Heart left ventricle (tissue), 16 donors: ENCODE measurements at regions of chr2 and their contacts with region 1.

Region 1: DNA sequence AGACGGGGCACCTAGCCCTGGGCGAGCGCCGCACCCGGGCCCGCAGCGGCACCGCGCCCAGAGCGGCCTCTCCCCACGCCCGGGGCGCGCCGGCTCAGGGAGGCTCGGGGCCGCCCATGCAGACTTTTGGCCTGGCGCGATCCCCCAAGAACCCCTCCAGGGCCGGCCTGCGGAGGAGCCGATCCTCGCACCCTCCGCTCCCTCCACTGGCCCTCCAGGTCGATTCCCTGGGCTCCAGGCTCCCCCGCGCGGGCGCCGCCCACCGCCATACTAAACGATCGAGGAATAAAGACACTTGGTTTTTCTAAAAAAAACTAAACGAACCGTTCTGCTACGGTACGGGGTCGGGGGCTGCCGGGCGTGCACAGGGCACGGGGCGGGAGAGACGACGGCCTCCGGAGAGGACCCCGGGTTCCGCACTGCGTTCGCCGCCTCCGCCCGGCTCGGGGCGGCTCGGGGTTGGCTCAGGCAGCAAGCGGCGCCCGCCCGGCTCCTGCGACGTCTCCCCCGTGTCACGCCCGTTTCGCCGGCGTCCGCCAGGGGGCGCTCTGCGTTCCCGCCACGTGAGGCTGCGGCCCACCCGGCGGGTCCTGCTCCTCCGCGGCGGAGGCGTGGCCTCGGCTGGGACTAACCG is 365 bp upstream of the KHK start:
- DNase-seq: peak; percentile 94 to 98 (median 96)
- ATAC-seq: peak; percentile 79 to 90 (median 88)
- H3K4me3 ChIP-seq: peak overlapping the region; percentile 54 to 88 (median 74)
- H3K27ac ChIP-seq: peak overlapping the region; percentile 78 to 96 (median 94)
- H3K4me1 ChIP-seq: peaks cover 4 to 46% (median 28%) of the 10 kb centered on the region in 12 donors
- H3K27me3 ChIP-seq: no peaks in the 10 kb centered on the region
- CTCF ChIP-seq: peak; percentile 75 to 96 (median 94)
- POLR2A ChIP-seq: peak in 1 of 2 donors; percentile 69

Region 2: GRCh38 chr2:26959331-26959730 is 126.9 kb before region 1 on chr2:
- intact Hi-C with region 1: loop called (anchors 1 to 5 kb)
- DNase-seq: no peak
- ATAC-seq: peak in 1 of 4 donors; percentile 44
- H3K4me3 ChIP-seq: no peak overlapping the region
- H3K27ac ChIP-seq: no peak overlapping the region
- H3K4me1 ChIP-seq: peaks cover 0 to 7% (median 0%) of the 10 kb centered on the region in 12 donors
- H3K27me3 ChIP-seq: peaks cover 0 to 46% (median 7%) of the 10 kb centered on the region in 9 donors
- CTCF ChIP-seq: no peak
- POLR2A ChIP-seq: no peak

Region 3: GRCh38 chr2:26964446-26965130 is 121.6 kb before region 1 on chr2:
- intact Hi-C with region 1: loop called (anchors 1 to 5 kb)
- DNase-seq: no peak
- ATAC-seq: no peak
- H3K4me3 ChIP-seq: no peak overlapping the region
- H3K27ac ChIP-seq: no peak overlapping the region
- H3K4me1 ChIP-seq: peaks cover 0 to 7% (median 0%) of the 10 kb centered on the region in 12 donors
- H3K27me3 ChIP-seq: peaks cover 0 to 8% (median 0%) of the 10 kb centered on the region in 9 donors
- CTCF ChIP-seq: no peak
- POLR2A ChIP-seq: no peak

Region 4: DNA sequence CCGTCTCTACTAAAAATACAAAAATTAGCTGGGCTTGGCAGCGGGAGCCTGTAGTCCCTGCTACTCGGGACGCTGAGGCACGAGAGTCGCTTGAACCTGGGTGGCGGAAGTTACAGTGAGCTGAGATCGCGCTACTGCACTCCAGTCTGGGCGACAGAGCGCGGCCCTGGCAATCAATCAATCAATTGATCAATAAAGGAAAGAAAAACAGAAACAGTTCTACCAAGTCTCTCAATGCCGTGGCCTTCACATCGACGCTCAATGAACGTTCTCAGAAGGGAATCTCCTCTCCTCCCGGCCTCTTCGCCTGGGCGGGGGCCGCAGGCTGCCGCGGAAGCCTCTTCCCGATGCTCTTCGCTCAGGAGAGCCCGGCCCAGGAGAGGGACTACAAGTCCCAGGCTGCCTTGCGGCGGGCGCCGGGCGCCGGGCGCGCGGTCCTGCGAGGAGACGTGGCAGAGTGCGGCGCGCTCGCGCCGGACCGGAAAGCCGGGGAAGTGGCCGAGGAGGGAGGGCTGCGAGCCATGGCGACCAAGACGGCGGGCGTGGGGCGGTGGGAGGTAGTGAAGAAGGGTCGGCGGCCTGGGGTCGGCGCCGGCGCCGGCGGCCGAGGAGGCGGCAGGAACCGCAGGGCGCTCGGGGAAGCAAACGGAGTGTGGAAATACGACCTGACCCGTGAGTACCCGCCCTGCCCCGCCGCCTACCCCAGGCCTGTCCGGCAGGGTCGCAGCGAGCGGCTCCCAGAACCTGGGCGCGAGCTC is 53.5 kb before region 1 on chr2 and contains the start of gene TMEM214:
- intact Hi-C with region 1: loop called in 8 of 10 experiments (anchors 5 to 10 kb)
- DNase-seq: peak; percentile 91 to 96 (median 92)
- ATAC-seq: peak; percentile 93 to 99 (median 98)
- H3K4me3 ChIP-seq: peak within 1 kb of the TSS; percentile 76 to 99 (median 94)
- H3K27ac ChIP-seq: peak within 1 kb of the TSS; percentile 59 to 92 (median 85)
- H3K4me1 ChIP-seq: peaks cover 0 to 29% (median 17%) of the 10 kb centered on the region in 12 donors
- H3K27me3 ChIP-seq: no peaks in the 10 kb centered on the region
- CTCF ChIP-seq: peak in 2 of 12 donors; percentile 12 to 16
- POLR2A ChIP-seq: peak in 1 of 2 donors; percentile 86
- total RNA-seq, gene TMEM214: 18.3 to 58.0 (median 31.6) TPM